ENCODE measurements at regions of chr12 and their contacts with region 1.

Region 1: GRCh38 chr12:92034858-92035401 is 110.7 kb downstream of the BTG1 start:
- DNase-seq: peak; percentile 93
- H3K4me3 ChIP-seq: peak overlapping the region; percentile 33 to 54 (median 42)
- H3K27ac ChIP-seq: peak overlapping the region; percentile 65 to 88 (median 84)
- H3K4me1 ChIP-seq: peaks cover 36 to 74% (median 72%) of the 10 kb centered on the region in 4 donors
- H3K27me3 ChIP-seq: no peaks in the 10 kb centered on the region
- CTCF ChIP-seq: no peak
- EP300 ChIP-seq: peak; percentile 34
- POLR2A ChIP-seq: no peak

Region 2: GRCh38 chr12:92070054-92070863 is 35.3 kb after region 1 on chr12:
- intact Hi-C with region 1: loop called (anchors 5 kb)
- DNase-seq: no peak
- H3K4me3 ChIP-seq: no peak overlapping the region
- H3K27ac ChIP-seq: no peak overlapping the region
- H3K4me1 ChIP-seq: peaks cover 3 to 16% (median 12%) of the 10 kb centered on the region in 4 donors
- H3K27me3 ChIP-seq: no peaks in the 10 kb centered on the region
- CTCF ChIP-seq: no peak
- EP300 ChIP-seq: no peak
- POLR2A ChIP-seq: no peak

Region 3: GRCh38 chr12:92139634-92140150 is 104.8 kb after region 1 on chr12:
- intact Hi-C with region 1: loop called (anchors 2 kb)
- DNase-seq: no peak
- H3K4me3 ChIP-seq: peak overlapping the region; percentile 77 to 97 (median 91)
- H3K27ac ChIP-seq: peak overlapping the region; percentile 4 to 99 (median 76)
- H3K4me1 ChIP-seq: peaks cover 30 to 58% (median 51%) of the 10 kb centered on the region in 4 donors
- H3K27me3 ChIP-seq: no peaks in the 10 kb centered on the region
- CTCF ChIP-seq: no peak
- EP300 ChIP-seq: no peak
- POLR2A ChIP-seq: no peak

Measured in esophagus muscularis mucosa (tissue), 4 donors.